ENCODE measurements at regions of chr5 and their contacts with region 1.

Region 1: GRCh38 chr5:54517174-54518092 is at the start of gene SNX18:
- DNase-seq: peak; percentile 84 to 97 (median 91)
- ATAC-seq: peak; percentile 90
- H3K4me3 ChIP-seq: peak within 1 kb of the TSS; percentile 69
- H3K4me3 Mint-ChIP-seq: peak within 1 kb of the TSS; percentile 87
- H3K27ac ChIP-seq: peak within 1 kb of the TSS in 1 of 2 donors; percentile 61
- H3K27ac Mint-ChIP-seq: peak within 1 kb of the TSS; percentile 70
- H3K4me1 ChIP-seq: peaks cover 40% of the 10 kb centered on the region
- H3K4me1 Mint-ChIP-seq: peaks cover 34% of the 10 kb centered on the region
- H3K27me3 ChIP-seq: no peaks in the 10 kb centered on the region
- H3K27me3 Mint-ChIP-seq: peaks cover 4% of the 10 kb centered on the region
- CTCF ChIP-seq: peak; percentile 95
- total RNA-seq, gene SNX18: 10.1 to 10.3 TPM

Region 2: DNA sequence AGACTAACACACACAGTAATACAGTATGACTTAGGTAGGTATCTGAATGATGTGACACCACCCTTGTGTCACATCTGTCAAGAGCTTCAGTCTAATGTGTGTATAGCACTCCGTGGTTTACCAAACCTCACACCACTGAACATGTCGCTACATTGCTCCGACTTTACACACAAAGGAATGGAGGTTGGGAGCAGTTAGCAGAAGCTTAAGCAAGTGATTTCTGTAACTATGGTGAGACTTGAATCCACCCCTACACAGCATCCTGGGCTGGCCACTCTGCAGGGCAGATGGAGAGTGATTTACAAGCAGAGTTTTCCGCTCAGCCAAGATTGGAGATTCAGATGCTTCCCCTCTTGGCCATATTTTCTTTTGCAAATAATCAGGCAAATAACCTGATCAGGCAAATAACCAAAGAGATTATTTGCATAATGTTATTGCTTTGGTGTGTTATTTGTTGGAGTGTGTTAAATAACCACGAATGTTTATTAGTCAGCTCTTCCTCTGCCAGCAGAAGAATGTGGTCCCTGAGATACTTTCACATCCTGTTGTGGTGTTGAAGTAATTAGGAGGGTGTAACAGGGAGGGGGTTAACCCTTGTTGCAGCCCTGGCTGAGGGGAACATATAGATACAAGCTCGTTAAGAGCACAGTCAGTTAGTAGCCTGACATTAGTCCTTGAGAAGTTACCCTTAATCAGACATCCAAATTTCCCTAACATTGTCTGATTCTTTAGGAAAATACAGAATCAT is 92.9 kb after region 1 on chr5:
- CTCF ChIA-PET with region 1: no interaction called
- POLR2A ChIA-PET with region 1: interaction called, 11 read pairs
- intact Hi-C with region 1: no loop called
- DNase-seq: peak in 5 of 14 experiments; percentile 5 to 78 (median 55)
- ATAC-seq: peak; percentile 85
- H3K4me3 ChIP-seq: no peak overlapping the region
- H3K4me3 Mint-ChIP-seq: peak overlapping the region; percentile 35
- H3K27ac ChIP-seq: peak overlapping the region in 1 of 2 donors; percentile 49
- H3K27ac Mint-ChIP-seq: peak overlapping the region; percentile 72
- H3K4me1 ChIP-seq: peaks cover 21% of the 10 kb centered on the region
- H3K4me1 Mint-ChIP-seq: peaks cover 31% of the 10 kb centered on the region
- H3K27me3 ChIP-seq: no peaks in the 10 kb centered on the region
- H3K27me3 Mint-ChIP-seq: no peaks in the 10 kb centered on the region
- CTCF ChIP-seq: no peak

Region 3: GRCh38 chr5:54646356-54647101 is 129.1 kb after region 1 on chr5:
- CTCF ChIA-PET with region 1: no interaction called
- POLR2A ChIA-PET with region 1: interaction called, 29 read pairs
- intact Hi-C with region 1: loop called in 1 of 2 experiments (anchors 5 kb)
- DNase-seq: peak; percentile 18 to 85 (median 52)
- ATAC-seq: peak; percentile 85
- H3K4me3 ChIP-seq: peak overlapping the region; percentile 13
- H3K4me3 Mint-ChIP-seq: peak overlapping the region; percentile 80
- H3K27ac ChIP-seq: peak overlapping the region; percentile 56 to 70
- H3K27ac Mint-ChIP-seq: peak overlapping the region; percentile 97
- H3K4me1 ChIP-seq: peaks cover 43% of the 10 kb centered on the region
- H3K4me1 Mint-ChIP-seq: peaks cover 58% of the 10 kb centered on the region
- H3K27me3 ChIP-seq: no peaks in the 10 kb centered on the region
- H3K27me3 Mint-ChIP-seq: no peaks in the 10 kb centered on the region
- CTCF ChIP-seq: no peak

Region 4: GRCh38 chr5:54743997-54744788 is 226.8 kb after region 1 on chr5:
- CTCF ChIA-PET with region 1: interaction called, 11 read pairs
- POLR2A ChIA-PET with region 1: interaction called, 7 read pairs
- intact Hi-C with region 1: no loop called
- DNase-seq: peak in 13 of 14 experiments; percentile 13 to 89 (median 39)
- ATAC-seq: peak; percentile 95
- H3K4me3 ChIP-seq: no peak overlapping the region
- H3K4me3 Mint-ChIP-seq: peak overlapping the region; percentile 16
- H3K27ac ChIP-seq: peak overlapping the region in 1 of 2 donors; percentile 18
- H3K27ac Mint-ChIP-seq: peak overlapping the region; percentile 67
- H3K4me1 ChIP-seq: peaks cover 30% of the 10 kb centered on the region
- H3K4me1 Mint-ChIP-seq: peaks cover 19% of the 10 kb centered on the region
- H3K27me3 ChIP-seq: no peaks in the 10 kb centered on the region
- H3K27me3 Mint-ChIP-seq: no peaks in the 10 kb centered on the region
- CTCF ChIP-seq: no peak

Region 5: DNA sequence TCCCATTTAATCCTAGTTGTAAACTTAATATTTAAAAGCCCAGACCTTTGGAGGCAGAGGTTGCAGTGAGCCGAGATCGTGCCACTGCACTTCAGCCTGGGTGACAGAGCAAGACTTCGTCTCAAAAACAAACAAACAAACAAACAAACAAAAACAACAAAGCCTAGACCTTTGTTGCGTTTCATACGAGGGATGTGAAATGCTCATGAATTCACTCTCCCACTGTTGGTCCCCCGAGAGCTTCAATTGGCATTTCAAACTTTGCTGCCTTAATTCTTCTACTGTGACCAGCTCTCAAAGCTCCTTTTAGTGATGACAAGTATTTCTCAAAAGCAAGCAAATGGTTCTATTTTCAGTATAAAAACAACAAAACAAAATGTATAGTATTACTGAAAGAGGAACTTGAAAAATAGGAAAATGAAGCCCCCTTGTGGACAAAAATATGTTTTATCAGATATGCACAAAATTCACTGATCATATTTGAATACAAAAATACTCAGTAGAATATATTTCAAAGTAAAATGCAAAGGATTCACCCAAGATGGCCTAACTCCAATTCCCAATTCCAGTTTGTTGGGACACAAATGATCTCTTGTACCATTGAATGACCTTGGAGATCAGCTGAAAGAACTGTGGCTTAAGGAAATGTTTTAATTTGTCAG is 327.6 kb after region 1 on chr5:
- CTCF ChIA-PET with region 1: interaction called, 58 read pairs
- POLR2A ChIA-PET with region 1: interaction called, 46 read pairs
- intact Hi-C with region 1: loop called (anchors 1 kb)
- DNase-seq: peak in 3 of 14 experiments; percentile 62 to 73 (median 71)
- ATAC-seq: no peak
- H3K4me3 ChIP-seq: peak overlapping the region; percentile 3
- H3K4me3 Mint-ChIP-seq: peak overlapping the region; percentile 60
- H3K27ac ChIP-seq: no peak overlapping the region
- H3K27ac Mint-ChIP-seq: no peak overlapping the region
- H3K4me1 ChIP-seq: peaks cover 2% of the 10 kb centered on the region
- H3K4me1 Mint-ChIP-seq: no peaks in the 10 kb centered on the region
- H3K27me3 ChIP-seq: peaks cover 3 to 4% of the 10 kb centered on the region in 2 experiments
- H3K27me3 Mint-ChIP-seq: peaks cover 16% of the 10 kb centered on the region
- CTCF ChIP-seq: peak; percentile 77

Region 6: DNA sequence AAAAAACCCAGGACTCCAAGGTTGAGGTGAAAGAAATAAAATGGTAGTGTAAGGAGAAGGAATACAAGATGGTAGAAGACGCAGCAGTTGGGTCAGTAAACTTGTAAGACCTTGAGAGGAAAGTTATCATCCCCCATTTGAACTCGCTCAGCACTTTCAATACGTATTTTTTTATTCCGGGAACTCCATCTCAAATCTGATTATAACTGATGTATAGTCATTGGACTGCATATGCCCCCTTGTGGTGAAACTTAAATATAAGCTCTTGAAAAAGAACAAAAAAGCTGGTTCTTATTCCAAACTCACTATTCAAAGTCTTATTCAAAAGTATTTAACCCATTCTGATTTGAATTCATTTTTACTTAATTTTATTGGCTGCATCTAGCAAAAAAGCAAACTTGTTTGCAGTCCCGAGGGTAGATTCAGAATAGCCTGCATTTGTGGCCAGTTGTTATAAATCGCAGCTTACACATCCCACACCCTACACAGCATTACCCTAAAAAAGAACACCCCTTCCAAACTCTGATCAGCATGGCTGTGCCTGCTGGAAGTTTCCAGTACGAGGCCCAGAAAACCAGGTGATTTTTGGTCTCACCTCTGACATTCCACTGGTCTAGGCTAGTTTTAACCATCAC is 350.0 kb after region 1 on chr5:
- CTCF ChIA-PET with region 1: interaction called, 32 read pairs
- POLR2A ChIA-PET with region 1: interaction called, 37 read pairs
- intact Hi-C with region 1: loop called (anchors 1 kb)
- DNase-seq: peak in 3 of 14 experiments; percentile 72 to 74 (median 73)
- ATAC-seq: peak; percentile 74
- H3K4me3 ChIP-seq: no peak overlapping the region
- H3K4me3 Mint-ChIP-seq: peak overlapping the region; percentile 6
- H3K27ac ChIP-seq: no peak overlapping the region
- H3K27ac Mint-ChIP-seq: no peak overlapping the region
- H3K4me1 ChIP-seq: peaks cover 4% of the 10 kb centered on the region
- H3K4me1 Mint-ChIP-seq: peaks cover 10% of the 10 kb centered on the region
- H3K27me3 ChIP-seq: no peaks in the 10 kb centered on the region
- H3K27me3 Mint-ChIP-seq: peaks cover 46% of the 10 kb centered on the region
- CTCF ChIP-seq: peak; percentile 86

Region 7: GRCh38 chr5:55159763-55160492 is 642.5 kb after region 1 on chr5 and contains the start of gene GPX8:
- CTCF ChIA-PET with region 1: interaction called, 3 read pairs
- POLR2A ChIA-PET with region 1: interaction called, 5 read pairs
- intact Hi-C with region 1: loop called (anchors 1 to 5 kb)
- DNase-seq: peak in 5 of 14 experiments; percentile 7 to 75 (median 67)
- ATAC-seq: peak; percentile 68
- H3K4me3 ChIP-seq: no peak within 1 kb of the TSS
- H3K4me3 Mint-ChIP-seq: no peak within 1 kb of the TSS
- H3K27ac ChIP-seq: no peak within 1 kb of the TSS
- H3K27ac Mint-ChIP-seq: no peak within 1 kb of the TSS
- H3K4me1 ChIP-seq: no peaks in the 10 kb centered on the region
- H3K4me1 Mint-ChIP-seq: no peaks in the 10 kb centered on the region
- H3K27me3 ChIP-seq: peaks cover 4 to 18% of the 10 kb centered on the region in 2 experiments
- H3K27me3 Mint-ChIP-seq: peaks cover 50% of the 10 kb centered on the region
- CTCF ChIP-seq: peak; percentile 74
- total RNA-seq, gene GPX8: not detected

Measured in CD4-positive, alpha-beta T cell (primary cell).